Calu3 (cell line): ENCODE measurements at regions of chr11 and their contacts with region 1.

Region 1: GRCh38 chr11:130279989-130280388 is 34.7 kb downstream of the ZBTB44 start:
- DNase-seq: no peak
- H3K4me3 Mint-ChIP-seq: no peak overlapping the region
- H3K27ac Mint-ChIP-seq: no peak overlapping the region
- H3K4me1 Mint-ChIP-seq: no peaks in the 10 kb centered on the region
- H3K27me3 Mint-ChIP-seq: no peaks in the 10 kb centered on the region
- CTCF ChIP-seq: no peak

Region 2: DNA sequence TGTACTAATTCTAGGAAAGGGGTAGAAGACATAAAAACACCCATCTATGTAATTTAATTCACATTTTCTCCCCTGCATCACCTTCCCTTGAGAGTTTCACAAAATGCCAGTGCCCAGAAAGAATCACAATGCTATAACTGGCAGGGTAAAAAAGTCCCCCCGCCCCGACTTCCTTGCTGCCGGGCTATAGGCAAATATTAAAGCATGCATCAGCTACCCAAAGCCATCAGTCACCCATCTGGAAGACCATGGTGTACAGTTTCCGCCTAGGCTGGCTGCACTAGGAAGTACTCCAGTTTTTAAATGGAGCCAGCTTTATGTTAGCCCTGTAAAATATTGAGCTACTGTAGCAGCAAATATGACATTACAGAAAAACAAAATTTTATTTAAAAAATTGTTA is 52.6 kb before region 1 on chr11:
- CTCF ChIA-PET with region 1: no interaction called
- intact Hi-C with region 1: no loop called
- DNase-seq: no peak
- H3K4me3 Mint-ChIP-seq: no peak overlapping the region
- H3K27ac Mint-ChIP-seq: no peak overlapping the region
- H3K4me1 Mint-ChIP-seq: no peaks in the 10 kb centered on the region
- H3K27me3 Mint-ChIP-seq: no peaks in the 10 kb centered on the region
- CTCF ChIP-seq: no peak

Region 3: GRCh38 chr11:130243816-130244215 is 36.2 kb before region 1 on chr11:
- CTCF ChIA-PET with region 1: no interaction called
- intact Hi-C with region 1: no loop called
- DNase-seq: no peak
- H3K4me3 Mint-ChIP-seq: no peak overlapping the region
- H3K27ac Mint-ChIP-seq: no peak overlapping the region
- H3K4me1 Mint-ChIP-seq: peaks cover 10% of the 10 kb centered on the region
- H3K27me3 Mint-ChIP-seq: no peaks in the 10 kb centered on the region
- CTCF ChIP-seq: no peak

Region 4: GRCh38 chr11:130300567-130300966 is 20.6 kb after region 1 on chr11:
- CTCF ChIA-PET with region 1: interaction called, 10 read pairs
- intact Hi-C with region 1: no loop called
- DNase-seq: no peak
- H3K4me3 Mint-ChIP-seq: no peak overlapping the region
- H3K27ac Mint-ChIP-seq: no peak overlapping the region
- H3K4me1 Mint-ChIP-seq: no peaks in the 10 kb centered on the region
- H3K27me3 Mint-ChIP-seq: no peaks in the 10 kb centered on the region
- CTCF ChIP-seq: no peak

Region 5: DNA sequence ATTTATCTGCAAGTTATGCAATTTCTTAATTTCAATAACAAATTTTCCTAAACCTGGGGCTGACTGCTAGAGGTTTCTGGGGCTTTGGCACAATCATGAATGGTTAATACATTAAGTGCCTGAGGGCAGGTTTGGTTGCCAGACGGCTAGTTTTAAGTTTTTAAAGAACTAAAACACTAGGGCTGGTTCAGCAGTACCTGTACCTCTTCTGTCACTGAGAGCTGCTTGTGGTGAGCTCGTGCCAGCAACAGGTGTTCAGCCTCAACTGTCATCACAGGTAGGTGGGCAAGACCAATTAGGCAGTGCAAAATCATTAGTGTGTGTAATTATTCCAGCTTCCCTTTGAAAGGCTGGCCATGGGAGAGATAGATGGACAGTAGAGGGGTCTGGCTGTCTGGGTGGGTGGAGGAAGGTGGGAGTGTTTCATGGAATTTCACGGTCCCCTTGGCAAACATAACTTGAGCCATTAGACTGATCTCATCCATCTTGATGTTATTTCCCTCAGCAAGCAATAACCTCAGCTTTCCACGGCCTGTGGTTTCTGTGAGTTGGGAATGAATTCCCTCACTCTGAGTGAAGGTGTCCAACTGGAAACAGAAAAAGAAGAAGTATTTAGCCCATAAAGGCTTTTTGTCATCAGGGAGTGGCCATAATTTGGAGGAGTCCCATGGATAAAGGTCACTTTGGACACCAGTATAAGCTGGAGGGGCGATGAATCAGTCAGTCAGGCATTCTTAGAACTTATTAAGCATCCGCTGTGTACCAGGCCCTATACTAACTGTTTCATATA is 521.5 kb after region 1 on chr11:
- CTCF ChIA-PET with region 1: no interaction called
- intact Hi-C with region 1: no loop called
- DNase-seq: no peak
- H3K4me3 Mint-ChIP-seq: no peak overlapping the region
- H3K27ac Mint-ChIP-seq: no peak overlapping the region
- H3K4me1 Mint-ChIP-seq: no peaks in the 10 kb centered on the region
- H3K27me3 Mint-ChIP-seq: no peaks in the 10 kb centered on the region
- CTCF ChIP-seq: no peak